ENCODE measurements at regions of chr2 and their contacts with region 1.

Region 1: DNA sequence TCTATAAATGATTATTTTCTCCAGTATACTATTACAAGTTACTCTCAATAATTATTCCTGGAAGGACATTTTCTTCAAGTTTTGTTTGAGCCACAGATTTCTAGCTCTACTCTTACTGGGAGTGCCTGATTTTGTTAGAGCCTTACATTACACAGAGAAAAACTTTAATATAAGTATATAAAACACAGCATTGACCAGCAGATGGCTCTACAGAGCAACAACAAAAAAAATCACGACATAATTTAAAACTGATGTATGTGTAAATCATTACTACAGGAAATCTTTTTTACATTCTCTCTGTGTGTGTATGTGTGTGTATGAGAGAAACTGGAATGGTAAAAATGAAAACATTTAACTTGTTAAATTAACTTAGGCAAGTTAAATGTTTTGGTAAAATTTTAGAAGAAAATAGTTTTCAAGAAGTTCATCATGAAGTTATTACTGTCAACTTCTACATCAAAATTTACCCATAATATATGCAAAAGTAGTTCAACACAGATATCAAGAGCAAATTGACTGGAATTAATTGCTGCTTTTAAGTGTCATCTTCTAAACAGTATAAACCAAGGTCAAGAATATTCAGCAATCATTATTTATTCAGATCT is 103.3 kb downstream of the MDH1 start:
- DNase-seq: no peak
- ATAC-seq: no peak

Region 2: GRCh38 chr2:63861220-63861822 is 169.2 kb after region 1 on chr2:
- intact Hi-C with region 1: loop called (anchors 1 kb)
- DNase-seq: no peak
- ATAC-seq: peak; percentile 66

Region 3: GRCh38 chr2:63888490-63889402 is 196.6 kb after region 1 on chr2:
- intact Hi-C with region 1: loop called (anchors 2 kb)
- DNase-seq: peak; percentile 33
- ATAC-seq: peak; percentile 70

Measured in Right ventricle myocardium inferior (tissue), 1 donor.